CD4-positive, alpha-beta memory T cell (primary cell): ENCODE measurements at regions of chrX and their contacts with region 1.

Region 1: DNA sequence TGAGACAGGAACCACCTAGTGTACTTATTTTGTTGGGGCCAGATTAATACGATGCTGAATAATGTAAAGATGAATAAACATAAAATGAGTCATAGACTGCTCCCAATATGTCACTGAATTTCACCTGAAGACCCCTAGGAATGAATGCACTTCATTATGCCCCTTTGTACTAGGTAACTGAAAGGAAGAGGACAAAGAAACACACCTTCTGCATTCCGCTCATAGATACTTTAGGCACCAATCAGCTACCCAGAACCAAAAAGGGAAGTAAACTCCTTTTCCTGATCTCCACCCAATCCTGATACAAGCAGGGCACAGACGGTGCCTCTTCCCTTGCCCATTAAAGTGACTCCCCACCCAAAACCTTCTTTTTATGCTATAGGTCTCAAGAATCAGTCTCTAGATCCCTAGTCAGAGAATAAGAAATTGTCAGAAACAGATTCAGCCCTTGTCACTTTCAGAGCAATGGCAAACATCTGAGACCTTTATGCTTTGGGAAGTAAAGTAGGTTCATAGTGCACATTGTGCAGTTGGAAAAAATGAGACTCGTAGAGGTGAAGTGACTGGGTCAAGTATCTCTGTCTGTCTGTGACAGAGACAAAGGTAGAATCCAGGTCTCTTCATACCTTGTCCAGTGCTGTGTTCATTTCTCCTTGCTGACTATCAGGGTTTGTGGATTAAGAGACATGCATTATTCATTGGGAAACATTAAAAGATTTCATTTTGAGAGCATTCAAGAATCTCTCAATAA is 2.3 kb downstream of the GPR174 start:
- DNase-seq: peak in 2 of 5 donors; percentile 30 to 36
- H3K4me3 ChIP-seq: peak overlapping the region; percentile 45 to 81
- H3K4me3 Mint-ChIP-seq: peak overlapping the region; percentile 83 to 98 (median 95)
- H3K27ac ChIP-seq: peak overlapping the region; percentile 76
- H3K27ac Mint-ChIP-seq: peak overlapping the region; percentile 86 to 98 (median 93)
- H3K4me1 ChIP-seq: peaks cover 53% of the 10 kb centered on the region
- H3K4me1 Mint-ChIP-seq: peaks cover 11 to 56% (median 23%) of the 10 kb centered on the region in 4 donors
- H3K27me3 ChIP-seq: no peaks in the 10 kb centered on the region
- H3K27me3 Mint-ChIP-seq: no peaks in the 10 kb centered on the region

Region 2: DNA sequence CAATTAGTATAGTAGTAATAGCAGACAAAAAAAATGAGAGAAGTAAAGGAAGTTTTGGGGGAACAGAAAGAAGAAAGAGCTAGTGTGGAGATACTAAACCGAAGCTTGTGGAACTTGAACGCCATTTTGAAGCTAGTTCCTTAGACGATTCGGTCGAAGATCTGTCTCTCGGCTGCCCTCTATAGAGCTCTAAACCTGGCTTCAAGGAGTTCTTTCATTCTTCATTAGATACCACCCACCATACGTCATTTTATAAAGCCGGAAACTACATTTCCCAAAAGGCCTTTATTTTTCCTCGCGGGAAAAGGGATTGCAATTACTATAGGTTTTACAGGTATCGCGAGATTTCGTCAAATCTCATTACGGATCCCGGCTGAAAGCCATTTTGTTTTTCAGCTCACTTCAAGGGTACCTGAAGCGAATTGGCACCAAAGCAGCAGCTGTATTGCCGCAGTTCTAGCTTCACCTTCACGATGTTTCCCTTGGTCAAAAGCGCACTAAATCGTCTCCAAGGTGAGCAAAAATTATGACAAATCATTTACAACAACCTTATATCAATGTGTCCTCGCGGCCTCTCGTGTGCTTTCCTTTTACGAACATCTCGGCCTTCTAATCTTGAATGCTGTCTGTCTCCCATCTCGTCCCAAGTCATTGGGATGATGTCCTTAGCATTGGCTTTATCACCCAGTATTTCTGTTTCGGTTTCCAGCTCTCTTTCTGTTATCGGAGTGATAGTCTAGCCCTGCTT is 1247.6 kb before region 1 on chrX and contains the start of gene COX7B:
- CTCF ChIA-PET with region 1: no interaction called
- POLR2A ChIA-PET with region 1: no interaction called
- intact Hi-C with region 1: loop called (anchors 10 kb)
- DNase-seq: peak; percentile 82 to 91 (median 88)
- H3K4me3 ChIP-seq: peak within 1 kb of the TSS; percentile 42 to 76
- H3K4me3 Mint-ChIP-seq: peak within 1 kb of the TSS; percentile 84 to 96 (median 91)
- H3K27ac ChIP-seq: peak within 1 kb of the TSS; percentile 81
- H3K27ac Mint-ChIP-seq: peak within 1 kb of the TSS; percentile 88 to 99 (median 95)
- H3K4me1 ChIP-seq: peaks cover 25% of the 10 kb centered on the region
- H3K4me1 Mint-ChIP-seq: peaks cover 7 to 49% (median 20%) of the 10 kb centered on the region in 4 donors
- H3K27me3 ChIP-seq: no peaks in the 10 kb centered on the region
- H3K27me3 Mint-ChIP-seq: no peaks in the 10 kb centered on the region
- total RNA-seq, gene COX7B: 115 to 126 TPM

Region 3: GRCh38 chrX:79081895-79082512 is 64.8 kb before region 1 on chrX:
- CTCF ChIA-PET with region 1: interaction called, 7 read pairs
- POLR2A ChIA-PET with region 1: interaction called, 40 read pairs
- intact Hi-C with region 1: loop called (anchors 2 kb)
- DNase-seq: peak; percentile 43 to 72 (median 65)
- H3K4me3 ChIP-seq: peak overlapping the region; percentile 6 to 32
- H3K4me3 Mint-ChIP-seq: peak overlapping the region; percentile 51 to 82 (median 78)
- H3K27ac ChIP-seq: peak overlapping the region; percentile 31
- H3K27ac Mint-ChIP-seq: peak overlapping the region; percentile 77 to 94 (median 90)
- H3K4me1 ChIP-seq: peaks cover 40% of the 10 kb centered on the region
- H3K4me1 Mint-ChIP-seq: peaks cover 16 to 37% (median 25%) of the 10 kb centered on the region in 4 donors
- H3K27me3 ChIP-seq: no peaks in the 10 kb centered on the region
- H3K27me3 Mint-ChIP-seq: no peaks in the 10 kb centered on the region

Region 4: DNA sequence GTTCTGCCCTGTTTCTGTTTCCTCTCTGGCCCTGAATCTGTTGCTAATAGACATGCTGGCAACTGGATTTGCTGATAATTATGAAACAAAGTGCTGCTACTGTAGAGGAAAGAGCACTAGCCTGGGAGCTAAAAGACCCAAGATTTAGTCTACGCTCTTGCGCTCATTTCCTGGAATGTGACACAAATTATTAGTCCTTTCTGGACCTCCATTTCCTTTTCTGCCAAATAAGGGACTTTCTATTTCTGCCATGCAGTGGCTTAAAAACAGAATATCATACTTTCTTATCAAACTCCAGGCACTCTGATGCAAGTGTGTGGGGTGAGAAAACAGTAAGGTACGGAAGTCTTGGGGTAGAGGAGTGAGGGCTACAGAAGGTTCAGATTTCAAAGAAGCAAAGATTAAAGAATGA is 50.7 kb before region 1 on chrX:
- CTCF ChIA-PET with region 1: interaction called, 4 read pairs
- POLR2A ChIA-PET with region 1: interaction called, 34 read pairs
- intact Hi-C with region 1: no loop called
- DNase-seq: peak in 3 of 5 donors; percentile 41 to 45 (median 42)
- H3K4me3 ChIP-seq: peak overlapping the region; percentile 17 to 33
- H3K4me3 Mint-ChIP-seq: peak overlapping the region; percentile 31 to 84 (median 56)
- H3K27ac ChIP-seq: peak overlapping the region; percentile 68
- H3K27ac Mint-ChIP-seq: peak overlapping the region; percentile 83 to 96 (median 91)
- H3K4me1 ChIP-seq: peaks cover 69% of the 10 kb centered on the region
- H3K4me1 Mint-ChIP-seq: peaks cover 31 to 70% (median 52%) of the 10 kb centered on the region in 4 donors
- H3K27me3 ChIP-seq: no peaks in the 10 kb centered on the region
- H3K27me3 Mint-ChIP-seq: no peaks in the 10 kb centered on the region

Region 5: GRCh38 chrX:79161655-79162054 is 14.8 kb after region 1 on chrX:
- CTCF ChIA-PET with region 1: interaction called, 6 read pairs
- POLR2A ChIA-PET with region 1: interaction called, 109 read pairs
- intact Hi-C with region 1: loop called (anchors 1 kb)
- DNase-seq: peak; percentile 73 to 85 (median 79)
- H3K4me3 ChIP-seq: peak overlapping the region; percentile 45 to 55
- H3K4me3 Mint-ChIP-seq: peak overlapping the region; percentile 75 to 97 (median 94)
- H3K27ac ChIP-seq: peak overlapping the region; percentile 51
- H3K27ac Mint-ChIP-seq: peak overlapping the region; percentile 87 to 98 (median 95)
- H3K4me1 ChIP-seq: peaks cover 90% of the 10 kb centered on the region
- H3K4me1 Mint-ChIP-seq: peaks cover 37 to 85% (median 53%) of the 10 kb centered on the region in 4 donors
- H3K27me3 ChIP-seq: no peaks in the 10 kb centered on the region
- H3K27me3 Mint-ChIP-seq: no peaks in the 10 kb centered on the region

Region 6: GRCh38 chrX:79182616-79183015 is 35.8 kb after region 1 on chrX:
- CTCF ChIA-PET with region 1: no interaction called
- POLR2A ChIA-PET with region 1: interaction called, 35 read pairs
- intact Hi-C with region 1: no loop called
- DNase-seq: no peak
- H3K4me3 ChIP-seq: no peak overlapping the region
- H3K4me3 Mint-ChIP-seq: peak overlapping the region in 7 of 8 donors; percentile 18 to 85 (median 50)
- H3K27ac ChIP-seq: peak overlapping the region; percentile 43
- H3K27ac Mint-ChIP-seq: peak overlapping the region; percentile 71 to 92 (median 86)
- H3K4me1 ChIP-seq: peaks cover 83% of the 10 kb centered on the region
- H3K4me1 Mint-ChIP-seq: peaks cover 28 to 72% (median 47%) of the 10 kb centered on the region in 4 donors
- H3K27me3 ChIP-seq: no peaks in the 10 kb centered on the region
- H3K27me3 Mint-ChIP-seq: no peaks in the 10 kb centered on the region

Region 7: GRCh38 chrX:79195027-79195426 is 48.2 kb after region 1 on chrX:
- CTCF ChIA-PET with region 1: no interaction called
- POLR2A ChIA-PET with region 1: no interaction called
- intact Hi-C with region 1: no loop called
- DNase-seq: no peak
- H3K4me3 ChIP-seq: no peak overlapping the region
- H3K4me3 Mint-ChIP-seq: no peak overlapping the region
- H3K27ac ChIP-seq: no peak overlapping the region
- H3K27ac Mint-ChIP-seq: no peak overlapping the region
- H3K4me1 ChIP-seq: peaks cover 1% of the 10 kb centered on the region
- H3K4me1 Mint-ChIP-seq: peaks cover 0 to 2% (median 0%) of the 10 kb centered on the region in 4 donors
- H3K27me3 ChIP-seq: no peaks in the 10 kb centered on the region
- H3K27me3 Mint-ChIP-seq: no peaks in the 10 kb centered on the region

Region 8: GRCh38 chrX:79412972-79413371 is 266.2 kb after region 1 on chrX:
- CTCF ChIA-PET with region 1: no interaction called
- POLR2A ChIA-PET with region 1: interaction called, 5 read pairs
- intact Hi-C with region 1: loop called (anchors 5 kb)
- DNase-seq: peak in 4 of 5 donors; percentile 48 to 54 (median 50)
- H3K4me3 ChIP-seq: peak overlapping the region; percentile 23 to 34
- H3K4me3 Mint-ChIP-seq: peak overlapping the region; percentile 71 to 84 (median 82)
- H3K27ac ChIP-seq: peak overlapping the region; percentile 56
- H3K27ac Mint-ChIP-seq: peak overlapping the region; percentile 41 to 88 (median 82)
- H3K4me1 ChIP-seq: peaks cover 7% of the 10 kb centered on the region
- H3K4me1 Mint-ChIP-seq: peaks cover 18 to 35% (median 22%) of the 10 kb centered on the region in 4 donors
- H3K27me3 ChIP-seq: no peaks in the 10 kb centered on the region
- H3K27me3 Mint-ChIP-seq: no peaks in the 10 kb centered on the region